ENCODE measurements at regions of chr11 and their contacts with region 1.

Region 1: GRCh38 chr11:107770551-107770951 is 58.7 kb upstream of the SLN start:
- DNase-seq: peak; percentile 51
- ATAC-seq: peak; percentile 9; the same call in 1 of the 2 replicates
- H3K4me3 ChIP-seq: no peak overlapping the region
- H3K27ac ChIP-seq: no peak overlapping the region
- H3K4me1 ChIP-seq: peaks cover 15% of the 10 kb centered on the region
- H3K27me3 ChIP-seq: peaks cover 6% of the 10 kb centered on the region
- CTCF ChIP-seq: no peak

Region 2: GRCh38 chr11:107573438-107573837 is 197.1 kb before region 1 on chr11:
- CTCF ChIA-PET with region 1: no interaction called
- POLR2A ChIA-PET with region 1: no interaction called
- intact Hi-C with region 1: loop called (anchors 1 kb)
- DNase-seq: no peak
- ATAC-seq: no peak
- H3K4me3 ChIP-seq: no peak overlapping the region
- H3K27ac ChIP-seq: no peak overlapping the region
- H3K4me1 ChIP-seq: no peaks in the 10 kb centered on the region
- H3K27me3 ChIP-seq: peaks cover 5% of the 10 kb centered on the region; the same call in 1 of the 2 replicates
- CTCF ChIP-seq: no peak

Region 3: GRCh38 chr11:107741044-107741823 is 29.3 kb before region 1 on chr11:
- CTCF ChIA-PET with region 1: interaction called, 14 read pairs
- POLR2A ChIA-PET with region 1: no interaction called
- intact Hi-C with region 1: loop called (anchors 2 kb)
- DNase-seq: peak; percentile 73
- ATAC-seq: peak; percentile 86
- H3K4me3 ChIP-seq: no peak overlapping the region
- H3K27ac ChIP-seq: no peak overlapping the region
- H3K4me1 ChIP-seq: no peaks in the 10 kb centered on the region
- H3K27me3 ChIP-seq: peaks cover 45% of the 10 kb centered on the region
- CTCF ChIP-seq: peak; percentile 98

Region 4: GRCh38 chr11:107791343-107792048 is 20.9 kb after region 1 on chr11:
- CTCF ChIA-PET with region 1: no interaction called
- POLR2A ChIA-PET with region 1: no interaction called
- intact Hi-C with region 1: no loop called
- DNase-seq: no peak
- ATAC-seq: no peak
- H3K4me3 ChIP-seq: no peak overlapping the region
- H3K27ac ChIP-seq: no peak overlapping the region
- H3K4me1 ChIP-seq: peaks cover 10% of the 10 kb centered on the region
- H3K27me3 ChIP-seq: no peaks in the 10 kb centered on the region
- CTCF ChIP-seq: no peak

Measured in PC-3 (cell line).